ENCODE measurements at regions of chr7 and their contacts with region 1.

Region 1: DNA sequence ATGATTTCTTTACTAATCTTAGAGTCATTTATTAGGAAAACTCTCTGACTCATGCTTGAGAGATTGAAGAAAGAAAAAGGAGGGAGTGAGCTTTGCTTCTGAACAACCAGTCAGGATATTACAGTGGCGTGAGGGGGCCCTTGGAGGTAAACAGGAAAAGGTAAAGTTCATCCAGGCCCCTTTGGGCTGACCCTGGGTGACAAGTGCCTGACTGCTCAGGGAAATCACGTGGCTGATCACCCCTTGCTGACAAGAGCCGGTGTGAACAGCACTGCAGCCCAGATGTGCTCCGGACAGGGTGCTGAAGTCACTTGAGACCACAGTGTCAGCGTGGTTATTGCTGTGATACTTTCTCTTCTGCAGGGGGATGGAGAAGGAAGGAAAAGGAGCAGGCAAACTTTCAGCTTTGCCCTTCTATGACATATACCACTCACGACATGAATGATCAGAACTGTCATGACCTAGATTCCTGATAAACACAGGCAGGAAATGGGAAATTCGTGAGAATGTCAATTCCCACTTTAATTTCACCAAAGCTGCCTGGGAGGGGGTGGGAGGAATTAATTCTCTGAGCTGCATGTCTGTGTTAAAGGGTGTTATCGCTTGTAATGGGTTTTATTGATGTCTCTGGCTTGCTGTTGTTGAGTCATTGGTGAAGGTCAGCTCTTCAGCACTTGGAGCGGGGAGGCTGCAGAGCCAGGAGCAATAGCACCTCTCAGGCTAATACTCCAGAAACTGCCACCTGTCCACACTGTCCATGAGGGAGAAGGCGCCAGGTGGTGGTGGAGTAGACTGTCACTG is 139.8 kb upstream of the AOAH start:
- DNase-seq: peak; percentile 38
- ATAC-seq: peak; percentile 96
- H3K4me3 ChIP-seq: peak overlapping the region; percentile 6 to 20 (median 17); a peak in 3 of 6 replicates
- H3K27ac ChIP-seq: peak overlapping the region; percentile 57
- H3K4me1 ChIP-seq: peaks cover 37% of the 10 kb centered on the region
- H3K27me3 ChIP-seq: 0 out of 5 replicates have a peak, but pooled peaks cover 0 to 1% of the 10 kb centered on the region in 2 experiments
- CTCF ChIP-seq: no peak
- EP300 ChIP-seq: peak in 1 of 2 experiments; percentile 84; a peak in 2 of 4 replicates
- POLR2A ChIP-seq: peak in 1 of 2 experiments; percentile 65; a peak in 1 of 4 replicates
- RAD21 ChIP-seq: no peak

Region 2: DNA sequence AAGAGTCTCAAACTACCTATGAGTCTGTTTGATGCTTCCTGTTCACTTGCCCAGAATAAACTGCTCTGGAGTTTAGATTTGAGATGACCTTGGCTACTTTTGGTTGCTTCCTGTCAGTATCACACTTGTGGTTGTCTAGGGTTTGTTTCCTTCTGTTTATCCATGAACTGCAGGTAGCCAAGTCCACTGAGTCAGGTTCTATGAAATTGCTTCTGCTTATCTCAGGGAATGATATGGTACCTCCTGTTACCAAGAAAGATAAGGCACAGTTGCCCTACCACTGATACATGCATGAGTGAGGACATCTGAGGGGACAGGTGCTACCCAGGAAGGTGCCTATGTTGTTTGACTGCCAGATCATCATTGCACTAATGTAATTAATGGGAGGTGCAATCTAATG is 726.8 kb before region 1 on chr7:
- CTCF ChIA-PET with region 1: no interaction called
- POLR2A ChIA-PET with region 1: no interaction called
- in situ Hi-C with region 1: no loop called
- intact Hi-C with region 1: loop called (anchors 5 kb)
- DNase-seq: no peak
- ATAC-seq: no peak
- H3K4me3 ChIP-seq: no peak overlapping the region
- H3K27ac ChIP-seq: no peak overlapping the region
- H3K4me1 ChIP-seq: 0 out of 2 replicates have a peak, but pooled peaks cover 8% of the 10 kb centered on the region
- H3K27me3 ChIP-seq: peaks cover 1 to 8% of the 10 kb centered on the region in 2 experiments; a peak in 1 of 5 replicates
- CTCF ChIP-seq: no peak
- EP300 ChIP-seq: no peak
- POLR2A ChIP-seq: no peak
- RAD21 ChIP-seq: no peak

Measured in HepG2 (cell line).